ENCODE measurements at regions of chr14 and their contacts with region 1.

Region 1: DNA sequence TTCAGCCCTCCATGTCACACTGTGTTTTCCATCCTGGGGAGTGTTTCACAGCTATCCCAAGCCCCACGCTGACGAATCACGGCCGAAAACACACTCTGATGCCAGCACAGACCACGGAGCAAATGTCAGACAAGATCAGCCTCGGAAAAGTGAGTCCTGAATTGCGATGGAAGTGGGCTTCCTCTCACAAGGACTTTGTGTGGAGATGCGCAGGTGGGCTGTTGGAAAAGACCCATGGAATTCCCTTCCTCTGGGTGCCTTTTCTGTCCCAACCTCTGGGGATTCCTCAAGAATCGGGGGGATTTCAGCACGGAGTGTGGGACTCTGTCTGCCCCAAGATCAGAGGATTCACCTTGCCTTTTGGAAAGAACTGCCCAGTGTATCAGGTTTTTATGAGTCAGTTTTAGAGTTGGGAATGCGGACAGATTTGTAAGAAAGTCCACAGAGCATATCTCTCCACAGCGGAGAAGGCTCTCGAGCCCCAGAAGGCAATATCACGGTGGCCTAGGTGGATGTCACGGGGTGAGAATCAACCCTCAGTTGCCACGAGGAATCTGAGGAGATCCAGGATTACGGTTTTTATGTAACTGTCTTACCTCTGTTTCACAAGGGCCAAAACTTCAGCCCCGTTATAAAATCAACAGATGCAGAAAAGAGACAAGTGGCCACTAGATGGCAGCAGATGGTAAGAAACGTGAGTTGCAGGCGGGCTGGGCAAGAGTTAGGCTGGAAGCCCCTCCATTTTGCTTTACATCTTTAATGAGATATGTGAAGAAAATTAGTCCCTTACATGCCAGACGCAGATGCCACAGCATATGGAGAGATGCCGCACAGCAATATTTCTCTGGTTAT is 201.9 kb downstream of the DAD1 start:
- H3K4me3 Mint-ChIP-seq: no peak overlapping the region
- H3K27ac Mint-ChIP-seq: no peak overlapping the region
- H3K4me1 Mint-ChIP-seq: peaks cover 7% of the 10 kb centered on the region
- H3K27me3 Mint-ChIP-seq: no peaks in the 10 kb centered on the region

Region 2: DNA sequence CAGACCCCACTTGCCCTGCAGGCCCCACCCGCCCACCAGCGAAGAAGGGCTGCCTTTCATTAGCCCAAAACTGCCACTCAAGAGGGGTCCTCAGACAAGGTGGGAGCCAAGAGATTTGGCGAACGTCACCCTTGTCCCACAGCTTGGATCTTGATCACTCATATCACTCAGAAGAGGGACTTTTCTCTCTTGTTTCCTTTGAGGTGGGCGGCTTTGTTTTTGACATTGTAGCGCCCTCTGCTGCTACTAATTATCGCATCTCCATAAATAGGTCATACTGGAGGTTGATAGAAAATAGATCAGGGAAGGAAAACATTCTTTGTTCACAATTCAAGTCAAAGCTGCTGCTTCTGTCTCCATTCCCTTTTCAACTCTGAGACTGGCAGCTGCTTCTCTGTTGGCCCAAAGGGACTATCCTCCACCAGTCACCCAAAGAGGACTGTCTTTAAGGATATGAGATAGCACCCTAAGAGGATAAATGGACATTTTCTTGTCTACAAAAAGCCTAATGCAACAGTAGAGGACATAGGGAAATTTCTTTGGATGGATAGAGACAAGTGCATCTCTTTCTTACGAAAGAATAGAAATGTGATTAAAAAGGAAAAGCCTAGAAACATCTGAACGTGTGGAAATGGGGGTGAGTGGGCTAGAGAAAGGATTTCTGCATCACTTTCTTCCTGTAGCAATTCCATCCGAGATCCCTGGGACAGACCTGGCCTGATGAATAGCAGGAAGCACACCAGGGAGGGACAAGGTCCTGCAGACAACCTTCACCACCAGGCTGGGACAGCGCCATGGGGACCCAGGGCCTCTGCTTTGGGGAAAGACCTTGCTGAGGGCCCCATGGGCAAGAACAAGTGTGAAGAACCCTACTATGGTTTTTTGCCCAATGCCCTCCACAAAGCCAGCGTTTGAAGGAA is 86.0 kb after region 1 on chr14:
- intact Hi-C with region 1: loop called (anchors 1 kb)
- H3K4me3 Mint-ChIP-seq: no peak overlapping the region
- H3K27ac Mint-ChIP-seq: no peak overlapping the region
- H3K4me1 Mint-ChIP-seq: peaks cover 14% of the 10 kb centered on the region
- H3K27me3 Mint-ChIP-seq: peaks cover 1% of the 10 kb centered on the region

Region 3: DNA sequence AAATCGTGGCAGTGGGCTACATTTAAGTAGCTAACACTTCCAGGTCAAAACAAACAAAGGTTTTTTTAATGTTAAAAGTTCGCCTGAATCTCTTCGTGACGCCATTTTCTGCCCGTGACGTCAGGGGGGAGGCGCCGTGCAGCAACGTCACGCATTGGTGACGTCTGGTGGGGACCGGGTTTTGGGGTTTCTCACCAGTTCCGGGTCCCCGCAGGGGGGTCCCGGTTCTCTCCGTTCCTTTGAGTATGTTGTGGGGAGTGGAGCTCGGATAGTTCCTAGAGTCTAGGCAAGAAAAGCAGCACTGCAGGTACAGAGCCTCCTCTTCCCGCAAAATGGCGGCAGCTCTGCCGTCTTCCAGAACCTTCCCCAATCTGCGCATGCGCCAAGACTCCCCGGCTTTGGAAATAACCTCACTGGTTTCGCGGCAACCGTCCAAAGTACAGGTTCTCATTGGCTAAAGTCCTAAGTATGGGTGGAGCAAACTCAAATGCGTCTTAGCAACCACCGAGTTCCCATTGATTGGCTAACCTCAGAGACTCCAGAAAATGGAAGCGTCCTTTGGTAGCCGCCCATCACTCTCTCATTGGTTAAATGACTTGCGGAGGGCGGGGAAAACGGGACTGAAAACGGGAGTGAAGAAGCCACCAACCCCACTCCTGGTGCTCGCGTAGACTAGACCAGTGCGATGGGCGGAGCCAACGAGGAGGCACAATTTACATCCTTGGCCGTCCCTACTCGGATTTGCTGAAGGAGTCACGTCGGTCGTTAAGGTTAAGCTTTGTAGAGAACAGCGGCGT is 531.9 kb after region 1 on chr14 and contains the start of gene RBM23:
- intact Hi-C with region 1: no loop called
- H3K4me3 Mint-ChIP-seq: peak within 1 kb of the TSS; percentile 89
- H3K27ac Mint-ChIP-seq: peak within 1 kb of the TSS; percentile 100
- H3K4me1 Mint-ChIP-seq: peaks cover 50% of the 10 kb centered on the region
- H3K27me3 Mint-ChIP-seq: no peaks in the 10 kb centered on the region

Measured in dendritic cell treated with granulocyte-macrophage colony-stimulating factor and Interleukin-4, amounts not matched to agents 40 ng/mL and 50 ng/mL, for 4 days (primary cell).